Heart right ventricle (tissue), 16 donors: ENCODE measurements at regions of chr11 and their contacts with region 1.

Region 1: DNA sequence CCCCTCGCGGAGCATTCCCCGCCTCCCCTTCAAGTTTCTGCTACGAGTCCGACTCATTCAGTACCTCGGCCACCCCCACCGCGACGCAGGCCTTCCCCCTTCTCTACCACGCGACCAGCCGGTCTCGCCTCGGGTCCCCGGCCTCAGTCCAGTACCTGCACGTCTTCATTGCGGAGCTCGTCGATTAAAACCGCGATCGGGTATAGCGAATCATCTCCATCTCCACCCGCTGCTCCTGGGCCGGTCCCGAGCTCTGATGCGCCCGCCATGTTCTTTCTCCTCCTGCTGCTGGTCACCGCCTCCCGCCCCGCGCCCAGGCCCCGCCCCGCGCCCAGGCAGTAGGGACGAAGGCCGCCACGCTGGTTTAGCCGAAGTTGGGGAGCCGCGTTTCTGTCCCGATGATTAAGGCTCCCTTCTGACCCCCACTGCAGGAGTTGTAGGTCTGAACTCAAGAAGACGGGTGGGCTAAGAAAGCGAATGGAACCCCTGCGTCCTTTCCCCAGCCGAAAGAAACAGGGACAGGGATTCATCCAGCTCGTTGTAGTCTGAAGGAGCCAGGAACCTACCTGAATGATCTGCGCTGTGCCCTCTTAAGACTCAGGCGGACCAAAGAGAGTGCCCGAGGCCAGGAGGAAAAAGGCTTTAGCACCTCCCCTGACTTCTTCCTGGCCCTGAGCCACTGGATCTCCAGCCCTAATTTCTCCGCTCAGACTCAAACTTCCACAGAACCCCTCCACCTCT is at the start of gene PPP2R1B:
- DNase-seq: peak; percentile 76
- ATAC-seq: peak; percentile 97 to 99 (median 98)
- H3K4me3 ChIP-seq: peak within 1 kb of the TSS; percentile 68 to 97 (median 84)
- H3K27ac ChIP-seq: peak within 1 kb of the TSS; percentile 57 to 92 (median 86)
- H3K4me1 ChIP-seq: peaks cover 2 to 41% (median 28%) of the 10 kb centered on the region in 9 donors
- H3K27me3 ChIP-seq: no peaks in the 10 kb centered on the region
- CTCF ChIP-seq: no peak
- total RNA-seq, gene PPP2R1B: 8.4 to 16.8 (median 11.4) TPM

Region 2: DNA sequence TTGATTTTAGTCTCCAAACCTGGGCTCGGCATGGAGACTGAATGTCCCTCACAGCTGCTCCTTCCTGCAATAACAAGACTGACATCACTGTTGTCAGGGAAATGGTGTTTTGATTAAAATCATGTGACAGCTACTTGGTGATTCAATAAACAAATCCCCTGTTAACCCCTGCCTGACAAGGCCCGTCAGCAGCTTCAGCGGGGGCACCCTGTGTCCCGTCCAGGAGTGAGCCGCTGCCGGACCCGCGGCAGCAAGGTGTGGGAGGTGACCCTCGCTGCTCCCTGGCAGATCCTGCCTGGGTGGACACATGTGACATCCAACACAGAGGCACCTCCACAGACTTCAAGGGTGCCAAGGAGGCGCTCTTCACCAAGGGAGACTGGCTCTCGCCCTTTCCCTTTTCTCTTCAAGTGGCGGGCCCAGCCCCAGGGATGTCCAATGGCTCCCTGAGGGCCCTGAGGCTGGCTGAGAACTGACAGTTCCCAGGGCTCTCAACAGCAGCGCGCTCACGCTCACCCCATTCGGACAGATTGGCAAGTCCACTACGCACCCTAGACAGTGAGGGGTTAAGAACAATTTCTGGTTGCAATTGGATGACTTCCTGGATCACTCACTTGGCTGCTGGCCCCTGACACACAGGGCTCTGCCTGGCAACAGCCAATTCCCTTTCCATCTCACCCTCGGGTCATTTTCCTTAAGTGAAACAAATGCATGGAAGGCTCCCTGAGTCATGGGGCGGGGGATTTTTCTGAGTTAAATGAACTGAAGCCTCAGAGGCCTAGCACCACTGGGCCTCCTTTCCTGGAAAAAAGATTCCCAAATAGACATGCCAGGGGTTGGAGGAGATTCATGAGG is 30.8 kb before region 1 on chr11:
- intact Hi-C with region 1: loop called in 2 of 10 experiments (anchors 5 kb)
- DNase-seq: peak; percentile 73 to 88
- ATAC-seq: peak; percentile 68 to 85 (median 78)
- H3K4me3 ChIP-seq: peak overlapping the region in 9 of 10 donors; percentile 28 to 60 (median 51)
- H3K27ac ChIP-seq: peak overlapping the region; percentile 80 to 97 (median 94)
- H3K4me1 ChIP-seq: peaks cover 67 to 82% (median 79%) of the 10 kb centered on the region in 9 donors
- H3K27me3 ChIP-seq: no peaks in the 10 kb centered on the region
- CTCF ChIP-seq: peak in 1 of 9 donors; percentile 7

Region 3: DNA sequence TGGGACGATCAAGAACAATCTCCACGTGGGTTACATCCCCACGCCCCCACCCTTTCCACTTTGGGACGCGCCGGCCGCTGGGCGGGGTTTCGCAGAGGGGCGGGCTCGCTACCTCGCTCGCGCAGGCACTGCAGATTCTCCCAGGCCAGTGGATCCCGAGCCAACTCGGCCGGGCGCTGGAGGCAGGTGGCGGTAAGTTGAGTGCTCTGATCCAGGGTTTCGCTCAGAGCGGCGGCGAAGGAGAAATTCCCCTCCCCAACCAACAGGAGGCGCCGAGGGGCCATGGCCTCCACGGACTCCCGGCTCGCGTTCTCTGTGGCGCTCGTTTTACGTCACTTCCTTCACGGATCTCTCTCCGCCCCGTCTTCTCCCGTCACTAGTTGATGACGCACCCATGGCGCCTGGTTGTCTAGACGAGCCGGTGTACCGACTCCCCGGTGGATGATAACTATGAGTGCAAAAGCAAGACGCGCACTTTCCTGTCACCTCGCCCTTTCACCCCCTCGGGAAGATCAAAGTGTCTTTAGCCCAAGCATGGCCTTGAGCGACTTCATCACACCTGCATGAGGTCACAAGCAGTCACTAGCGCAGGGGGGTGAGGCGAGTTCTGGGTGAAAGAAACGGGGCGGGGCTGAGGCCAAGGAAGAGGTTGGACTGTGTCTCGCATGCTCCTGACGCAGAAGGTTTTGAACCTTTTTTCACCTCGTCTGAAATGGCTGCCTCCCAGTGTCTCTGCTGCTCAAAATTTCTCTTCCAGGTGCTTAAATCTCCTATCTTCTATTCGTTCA is 112.8 kb after region 1 on chr11 and contains the starts of genes CFAP68 and FDXACB1:
- intact Hi-C with region 1: no loop called
- DNase-seq: peak; percentile 93 to 98
- ATAC-seq: peak; percentile 94 to 98 (median 96)
- H3K4me3 ChIP-seq: peak within 1 kb of the TSS; percentile 57 to 86 (median 72)
- H3K27ac ChIP-seq: peak within 1 kb of the TSS; percentile 91 to 98 (median 95)
- H3K4me1 ChIP-seq: peaks cover 0 to 23% (median 19%) of the 10 kb centered on the region in 9 donors
- H3K27me3 ChIP-seq: no peaks in the 10 kb centered on the region
- CTCF ChIP-seq: peak; percentile 81 to 99 (median 97)
- total RNA-seq, gene CFAP68: 17.5 to 38.5 (median 31.5) TPM
- total RNA-seq, gene FDXACB1: 1.1 to 2.0 (median 1.5) TPM